Caco-2 (cell line): ENCODE measurements at regions of chr16 and their contacts with region 1.

Region 1: GRCh38 chr16:51237861-51238378 is 86.8 kb upstream of the SALL1 start:
- DNase-seq: peak; percentile 56 to 57
- H3K4me3 ChIP-seq: no peak overlapping the region
- H3K4me3 Mint-ChIP-seq: no peak overlapping the region
- H3K27ac Mint-ChIP-seq: no peak overlapping the region
- H3K4me1 ChIP-seq: peaks cover 44% of the 10 kb centered on the region
- H3K4me1 Mint-ChIP-seq: peaks cover 29% of the 10 kb centered on the region
- H3K27me3 ChIP-seq: peaks cover 3% of the 10 kb centered on the region
- H3K27me3 Mint-ChIP-seq: peaks cover 23% of the 10 kb centered on the region
- CTCF ChIP-seq: no peak

Region 2: GRCh38 chr16:50763211-50763610 is 474.7 kb before region 1 on chr16:
- CTCF ChIA-PET with region 1: no interaction called
- POLR2A ChIA-PET with region 1: interaction called, 12 read pairs
- intact Hi-C with region 1: no loop called
- DNase-seq: no peak
- H3K4me3 ChIP-seq: no peak overlapping the region
- H3K4me3 Mint-ChIP-seq: no peak overlapping the region
- H3K27ac Mint-ChIP-seq: no peak overlapping the region
- H3K4me1 ChIP-seq: no peaks in the 10 kb centered on the region
- H3K4me1 Mint-ChIP-seq: no peaks in the 10 kb centered on the region
- H3K27me3 ChIP-seq: no peaks in the 10 kb centered on the region
- H3K27me3 Mint-ChIP-seq: no peaks in the 10 kb centered on the region
- CTCF ChIP-seq: no peak

Region 3: GRCh38 chr16:51095084-51095881 is 142.6 kb before region 1 on chr16:
- CTCF ChIA-PET with region 1: interaction called, 10 read pairs
- POLR2A ChIA-PET with region 1: no interaction called
- intact Hi-C with region 1: no loop called
- DNase-seq: no peak
- H3K4me3 ChIP-seq: no peak overlapping the region
- H3K4me3 Mint-ChIP-seq: no peak overlapping the region
- H3K27ac Mint-ChIP-seq: no peak overlapping the region
- H3K4me1 ChIP-seq: no peaks in the 10 kb centered on the region
- H3K4me1 Mint-ChIP-seq: no peaks in the 10 kb centered on the region
- H3K27me3 ChIP-seq: no peaks in the 10 kb centered on the region
- H3K27me3 Mint-ChIP-seq: no peaks in the 10 kb centered on the region
- CTCF ChIP-seq: no peak

Region 4: GRCh38 chr16:51181503-51181811 is 56.5 kb before region 1 on chr16:
- CTCF ChIA-PET with region 1: no interaction called
- POLR2A ChIA-PET with region 1: no interaction called
- intact Hi-C with region 1: loop called (anchors 2 kb)
- DNase-seq: no peak
- H3K4me3 ChIP-seq: no peak overlapping the region
- H3K4me3 Mint-ChIP-seq: no peak overlapping the region
- H3K27ac Mint-ChIP-seq: no peak overlapping the region
- H3K4me1 ChIP-seq: no peaks in the 10 kb centered on the region
- H3K4me1 Mint-ChIP-seq: peaks cover 12% of the 10 kb centered on the region
- H3K27me3 ChIP-seq: no peaks in the 10 kb centered on the region
- H3K27me3 Mint-ChIP-seq: peaks cover 3% of the 10 kb centered on the region
- CTCF ChIP-seq: no peak

Region 5: GRCh38 chr16:51429041-51429440 is 191.1 kb after region 1 on chr16:
- CTCF ChIA-PET with region 1: no interaction called
- POLR2A ChIA-PET with region 1: no interaction called
- intact Hi-C with region 1: no loop called
- DNase-seq: no peak
- H3K4me3 ChIP-seq: no peak overlapping the region
- H3K4me3 Mint-ChIP-seq: no peak overlapping the region
- H3K27ac Mint-ChIP-seq: no peak overlapping the region
- H3K4me1 ChIP-seq: no peaks in the 10 kb centered on the region
- H3K4me1 Mint-ChIP-seq: no peaks in the 10 kb centered on the region
- H3K27me3 ChIP-seq: no peaks in the 10 kb centered on the region; the same call in 1 of the 2 replicates
- H3K27me3 Mint-ChIP-seq: peaks cover 11% of the 10 kb centered on the region
- CTCF ChIP-seq: no peak